ENCODE measurements at regions of chr11 and their contacts with region 1.

Region 1: GRCh38 chr11:63567044-63567840 is 4.1 kb upstream of the PLAAT2 start:
- DNase-seq: peak; percentile 93
- H3K4me3 Mint-ChIP-seq: peak overlapping the region; percentile 55
- H3K27ac Mint-ChIP-seq: peak overlapping the region; percentile 91
- H3K4me1 Mint-ChIP-seq: peaks cover 34% of the 10 kb centered on the region
- H3K27me3 Mint-ChIP-seq: peaks cover 13% of the 10 kb centered on the region

Region 2: DNA sequence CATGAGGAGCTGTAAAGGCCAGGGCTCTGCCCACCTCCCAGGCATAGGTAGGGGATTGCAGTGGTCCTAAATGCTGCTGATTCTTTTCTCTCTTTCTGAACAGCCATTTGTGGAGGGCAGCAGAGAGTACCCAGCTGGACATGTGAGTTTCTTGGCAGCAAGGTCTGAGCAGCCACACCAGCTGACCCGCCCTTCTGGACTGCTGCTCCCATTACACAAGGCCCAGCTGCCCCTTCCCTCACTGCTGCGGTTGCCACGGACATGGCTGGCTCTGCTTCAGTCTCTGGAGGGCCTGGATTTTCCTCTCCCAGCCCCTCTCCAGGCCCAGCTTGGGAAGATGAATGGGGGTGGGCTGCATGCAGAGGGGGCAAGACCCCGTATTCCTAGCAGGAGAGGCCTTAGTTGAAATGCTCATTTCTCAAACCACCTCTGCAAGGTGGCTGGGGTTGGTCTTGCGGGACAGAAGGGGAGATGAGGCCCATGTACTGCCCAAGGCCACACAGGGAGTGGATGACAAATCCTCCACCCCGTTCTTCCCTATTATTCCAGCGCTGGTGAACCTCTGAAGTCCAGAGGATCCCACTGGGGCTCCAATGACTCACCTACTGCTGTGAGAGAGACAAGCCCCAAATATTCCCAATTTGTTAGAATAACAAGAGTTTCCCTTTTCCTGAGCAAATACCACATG is 56.7 kb before region 1 on chr11:
- intact Hi-C with region 1: loop called (anchors 10 kb)
- DNase-seq: no peak
- H3K4me3 Mint-ChIP-seq: no peak overlapping the region
- H3K27ac Mint-ChIP-seq: no peak overlapping the region
- H3K4me1 Mint-ChIP-seq: peaks cover 5% of the 10 kb centered on the region
- H3K27me3 Mint-ChIP-seq: no peaks in the 10 kb centered on the region

Region 3: DNA sequence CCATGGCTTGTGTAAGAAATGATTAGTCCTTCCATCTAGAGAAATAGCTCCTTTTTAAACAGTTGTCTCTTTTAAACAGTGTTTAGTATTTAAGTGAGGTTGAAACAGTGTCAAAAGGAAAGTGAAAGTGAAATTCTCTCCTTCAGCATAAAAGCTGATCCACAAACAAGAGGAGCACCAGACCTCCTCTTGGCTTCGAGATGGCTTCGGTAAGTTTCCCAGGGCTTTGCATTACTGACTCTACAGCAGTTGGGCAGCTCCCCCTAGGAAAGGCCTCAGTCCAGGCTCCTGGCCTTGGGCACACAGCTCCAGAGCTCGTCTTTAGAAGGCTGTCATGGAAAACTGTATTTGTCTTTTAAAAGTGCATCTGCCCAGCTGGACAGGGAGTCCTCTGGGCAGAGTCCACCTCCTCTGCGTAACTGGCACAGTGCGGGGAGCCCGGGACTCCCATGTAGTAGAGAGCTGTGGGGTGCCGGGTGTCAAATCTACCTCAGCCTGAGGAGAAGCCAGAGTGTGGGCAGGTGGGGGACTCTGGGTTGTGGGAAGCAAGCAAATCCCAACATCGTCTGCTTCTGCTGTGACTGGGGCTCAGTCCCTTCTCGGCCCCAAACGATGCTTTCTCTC is 30.5 kb before region 1 on chr11 and contains the start of gene PLAAT4:
- intact Hi-C with region 1: loop called (anchors 1 kb)
- DNase-seq: peak; percentile 88
- H3K4me3 Mint-ChIP-seq: peak within 1 kb of the TSS; percentile 90
- H3K27ac Mint-ChIP-seq: peak within 1 kb of the TSS; percentile 88
- H3K4me1 Mint-ChIP-seq: peaks cover 66% of the 10 kb centered on the region
- H3K27me3 Mint-ChIP-seq: no peaks in the 10 kb centered on the region
- total RNA-seq, gene PLAAT4: 12.2 and 14.7 TPM in 2 replicates

Region 4: GRCh38 chr11:63553741-63554151 is 13.5 kb before region 1 on chr11:
- intact Hi-C with region 1: loop called (anchors 1 kb)
- DNase-seq: peak; percentile 84
- H3K4me3 Mint-ChIP-seq: peak overlapping the region; percentile 73
- H3K27ac Mint-ChIP-seq: peak overlapping the region; percentile 91
- H3K4me1 Mint-ChIP-seq: peaks cover 28% of the 10 kb centered on the region
- H3K27me3 Mint-ChIP-seq: no peaks in the 10 kb centered on the region

Region 5: GRCh38 chr11:63671322-63672155 is 104.3 kb after region 1 on chr11 and contains the start of gene ATL3:
- intact Hi-C with region 1: loop called (anchors 1 kb)
- DNase-seq: peak; percentile 98
- H3K4me3 Mint-ChIP-seq: peak within 1 kb of the TSS; percentile 82
- H3K27ac Mint-ChIP-seq: peak within 1 kb of the TSS; percentile 88
- H3K4me1 Mint-ChIP-seq: peaks cover 27% of the 10 kb centered on the region
- H3K27me3 Mint-ChIP-seq: no peaks in the 10 kb centered on the region
- total RNA-seq, gene ATL3: 38.5 and 39.5 TPM in 2 replicates

Measured in activated CD4-positive, alpha-beta T cell treated with anti-CD3 and anti-CD28 coated beads, Interleukin-2, amount 10 ng/mL, durations not matched to agents 24 days and 14 days (primary cell).